ENCODE measurements at regions of chr6 and their contacts with region 1.

Region 1: DNA sequence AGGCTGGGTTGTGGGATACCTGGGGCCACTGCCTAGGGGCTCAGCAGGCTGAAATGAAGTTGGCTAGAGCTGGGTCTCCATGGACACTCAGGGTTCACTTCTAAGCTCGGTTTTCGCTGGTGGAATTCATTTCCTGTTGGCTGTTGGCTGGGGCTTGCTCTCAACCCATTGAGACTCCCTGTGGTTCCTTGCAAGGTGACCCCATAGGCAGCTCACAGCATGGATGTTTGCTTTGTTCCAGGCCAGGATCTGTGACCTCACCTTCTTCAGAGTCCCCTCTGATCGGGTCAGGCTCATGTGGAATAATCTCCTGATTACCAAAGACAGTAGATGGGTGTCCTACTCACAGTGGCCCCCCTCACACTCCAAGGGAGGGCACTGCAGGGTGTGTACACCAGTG is 229.3 kb downstream of the QKI start:
- DNase-seq: no peak
- H3K4me3 ChIP-seq: no peak overlapping the region
- H3K27ac ChIP-seq: no peak overlapping the region
- H3K4me1 ChIP-seq: no peaks in the 10 kb centered on the region
- H3K27me3 ChIP-seq: peaks cover 0 to 31% (median 3%) of the 10 kb centered on the region in 5 experiments

Region 2: DNA sequence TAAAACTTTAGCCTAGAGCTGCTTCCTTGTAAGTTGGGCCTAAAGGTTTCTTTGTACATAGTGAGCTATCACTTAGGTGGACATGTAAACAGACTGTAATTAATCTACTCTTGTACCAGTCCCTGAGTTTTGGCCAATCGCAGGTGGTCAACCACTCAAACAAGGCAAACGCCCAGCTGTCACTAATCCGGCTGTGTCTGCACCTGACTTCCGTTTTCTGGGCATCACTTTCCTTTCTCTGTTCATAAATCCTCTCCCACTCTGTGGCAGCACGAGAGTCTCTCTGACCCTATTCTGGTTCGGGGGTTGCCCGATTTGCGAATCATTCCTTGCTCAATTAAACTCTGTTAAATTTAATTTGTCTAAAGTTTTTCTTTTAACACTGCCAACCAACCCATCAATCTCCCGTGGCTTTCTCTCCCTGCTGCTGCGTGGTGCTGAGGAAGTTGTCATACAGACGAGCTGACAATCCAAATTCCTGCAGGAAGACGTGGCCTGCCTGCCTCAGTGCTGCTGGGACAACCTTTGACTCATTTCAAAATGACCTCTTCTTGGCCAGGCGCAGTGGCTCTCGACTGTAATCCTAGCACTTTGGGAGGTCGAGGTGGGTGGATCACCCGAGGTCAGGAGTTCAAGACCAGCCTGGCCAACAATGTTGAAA is 23.1 kb before region 1 on chr6:
- CTCF ChIA-PET with region 1: no interaction called
- POLR2A ChIA-PET with region 1: interaction called, 10 read pairs
- DNase-seq: no peak
- H3K4me3 ChIP-seq: no peak overlapping the region
- H3K27ac ChIP-seq: no peak overlapping the region
- H3K4me1 ChIP-seq: no peaks in the 10 kb centered on the region
- H3K27me3 ChIP-seq: peaks cover 0 to 18% (median 0%) of the 10 kb centered on the region in 5 experiments

Region 3: GRCh38 chr6:164021589-164022250 is 377.9 kb after region 1 on chr6:
- CTCF ChIA-PET with region 1: no interaction called
- POLR2A ChIA-PET with region 1: no interaction called
- DNase-seq: peak; percentile 15 to 67 (median 51)
- H3K4me3 ChIP-seq: no peak overlapping the region
- H3K27ac ChIP-seq: no peak overlapping the region
- H3K4me1 ChIP-seq: peaks cover 0 to 18% (median 7%) of the 10 kb centered on the region in 4 experiments
- H3K27me3 ChIP-seq: peaks cover 0 to 2% (median 0%) of the 10 kb centered on the region in 5 experiments